ENCODE measurements at regions of chr11 and their contacts with region 1.

Region 1: DNA sequence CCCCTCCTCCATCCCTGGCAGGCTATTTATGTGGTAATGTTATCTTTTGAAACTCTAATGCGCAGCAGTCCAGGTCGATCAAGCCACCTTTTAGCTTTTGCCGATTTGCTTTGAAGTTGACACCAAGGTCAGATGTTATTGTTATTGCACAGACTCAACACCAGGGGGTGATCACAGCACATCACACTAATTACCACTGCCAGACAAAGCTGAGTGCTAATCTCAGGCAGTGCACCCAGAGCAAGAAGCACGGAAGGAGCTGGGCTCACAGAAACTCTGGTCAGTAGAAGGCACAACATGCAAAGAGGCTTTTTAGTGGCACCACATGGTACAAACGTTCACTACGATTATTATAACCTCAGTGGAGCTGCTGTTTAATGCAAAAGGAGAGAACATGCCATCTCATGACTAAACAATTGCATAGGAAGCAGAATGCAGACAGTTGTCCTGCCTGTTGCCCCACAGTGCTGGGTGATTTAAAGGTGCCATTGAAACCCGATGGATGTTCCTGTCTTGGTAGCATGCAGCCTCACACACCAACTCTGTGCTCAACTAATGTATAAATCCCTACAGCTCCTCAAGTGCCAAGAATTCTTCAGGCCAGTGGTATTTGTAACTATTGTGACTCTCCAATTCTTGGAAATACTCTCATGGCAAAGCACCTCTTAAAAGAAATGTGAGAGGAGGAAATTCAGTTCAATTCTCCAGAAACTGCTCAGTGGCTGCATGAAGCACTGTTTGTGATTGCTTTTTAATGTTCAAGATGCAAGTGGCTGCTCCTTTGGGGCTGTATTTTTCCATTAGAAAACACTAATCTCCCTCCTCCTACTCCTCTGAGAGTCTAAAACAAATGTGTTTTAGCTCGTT is 353.9 kb upstream of the DDI1 start:
- DNase-seq: peak; percentile 60
- ATAC-seq: peak; percentile 75
- H3K4me3 Mint-ChIP-seq: no peak overlapping the region
- H3K27ac Mint-ChIP-seq: no peak overlapping the region
- H3K4me1 Mint-ChIP-seq: peaks cover 3% of the 10 kb centered on the region
- H3K27me3 Mint-ChIP-seq: no peaks in the 10 kb centered on the region

Region 2: DNA sequence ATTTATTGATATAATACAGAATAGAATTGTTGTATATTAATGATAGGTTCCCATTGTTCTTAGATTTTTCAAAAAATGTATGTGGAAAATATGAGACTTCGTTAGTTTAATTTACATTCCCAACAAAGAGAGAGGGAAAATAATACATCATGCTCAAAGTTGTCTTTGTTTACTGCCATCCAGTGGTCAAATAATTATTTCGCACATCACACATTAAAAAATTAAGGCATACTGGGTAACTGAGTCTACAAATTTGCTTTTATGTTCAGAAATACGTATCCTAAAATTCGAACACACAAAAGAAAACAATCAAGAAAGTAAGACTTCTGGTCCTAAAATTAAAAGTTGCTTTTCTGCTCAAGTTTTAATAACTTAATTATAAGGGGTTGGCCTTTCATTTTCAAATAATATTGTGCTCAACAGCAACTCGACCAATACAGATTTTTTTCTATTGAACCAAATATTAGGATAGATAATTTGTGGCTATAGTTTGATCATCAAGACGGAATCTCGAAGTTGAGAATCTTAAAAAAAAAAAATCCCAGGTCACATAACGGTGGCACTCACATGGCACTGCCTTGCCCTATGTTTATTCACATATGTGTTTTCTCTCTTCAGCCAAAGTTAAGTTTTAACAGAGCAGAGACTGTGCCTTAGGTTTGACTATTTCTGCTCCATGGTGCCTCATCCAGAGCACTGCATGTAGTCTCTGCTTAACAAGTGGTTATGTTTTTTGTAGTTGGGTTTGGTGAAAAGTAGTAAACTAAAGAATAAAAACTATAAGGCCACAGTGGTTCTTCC is 469.1 kb after region 1 on chr11:
- CTCF ChIA-PET with region 1: no interaction called
- POLR2A ChIA-PET with region 1: no interaction called
- intact Hi-C with region 1: loop called in 1 of 2 experiments (anchors 1 kb)
- DNase-seq: no peak
- ATAC-seq: no peak
- H3K4me3 Mint-ChIP-seq: no peak overlapping the region
- H3K27ac Mint-ChIP-seq: no peak overlapping the region
- H3K4me1 Mint-ChIP-seq: no peaks in the 10 kb centered on the region
- H3K27me3 Mint-ChIP-seq: no peaks in the 10 kb centered on the region

Region 3: DNA sequence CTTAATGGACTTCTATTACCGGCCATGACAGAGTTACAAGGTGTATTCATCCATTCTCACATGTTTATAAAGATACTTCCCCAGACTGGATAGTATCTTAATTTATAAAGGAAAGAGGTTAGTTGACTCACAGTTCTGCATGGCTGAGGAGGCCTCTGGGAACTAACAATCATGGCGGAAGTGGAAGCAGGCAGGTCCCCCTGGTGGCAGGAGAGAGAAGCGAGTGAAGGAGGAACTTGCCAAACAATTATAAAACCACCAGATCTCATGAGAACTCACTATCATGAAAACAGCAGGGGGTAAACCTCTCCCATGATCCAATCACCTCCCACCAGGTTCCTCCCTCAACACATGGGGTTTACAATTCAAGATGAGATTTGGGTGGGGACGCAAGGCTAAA is 651.4 kb after region 1 on chr11:
- CTCF ChIA-PET with region 1: no interaction called
- POLR2A ChIA-PET with region 1: no interaction called
- intact Hi-C with region 1: loop called in 1 of 2 experiments (anchors 2 kb)
- DNase-seq: peak; percentile 33
- ATAC-seq: no peak
- H3K4me3 Mint-ChIP-seq: no peak overlapping the region
- H3K27ac Mint-ChIP-seq: no peak overlapping the region
- H3K4me1 Mint-ChIP-seq: no peaks in the 10 kb centered on the region
- H3K27me3 Mint-ChIP-seq: peaks cover 3% of the 10 kb centered on the region